Esophagus squamous epithelium (tissue), 5 donors: ENCODE measurements at regions of chr20 and their contacts with region 1.

Region 1: DNA sequence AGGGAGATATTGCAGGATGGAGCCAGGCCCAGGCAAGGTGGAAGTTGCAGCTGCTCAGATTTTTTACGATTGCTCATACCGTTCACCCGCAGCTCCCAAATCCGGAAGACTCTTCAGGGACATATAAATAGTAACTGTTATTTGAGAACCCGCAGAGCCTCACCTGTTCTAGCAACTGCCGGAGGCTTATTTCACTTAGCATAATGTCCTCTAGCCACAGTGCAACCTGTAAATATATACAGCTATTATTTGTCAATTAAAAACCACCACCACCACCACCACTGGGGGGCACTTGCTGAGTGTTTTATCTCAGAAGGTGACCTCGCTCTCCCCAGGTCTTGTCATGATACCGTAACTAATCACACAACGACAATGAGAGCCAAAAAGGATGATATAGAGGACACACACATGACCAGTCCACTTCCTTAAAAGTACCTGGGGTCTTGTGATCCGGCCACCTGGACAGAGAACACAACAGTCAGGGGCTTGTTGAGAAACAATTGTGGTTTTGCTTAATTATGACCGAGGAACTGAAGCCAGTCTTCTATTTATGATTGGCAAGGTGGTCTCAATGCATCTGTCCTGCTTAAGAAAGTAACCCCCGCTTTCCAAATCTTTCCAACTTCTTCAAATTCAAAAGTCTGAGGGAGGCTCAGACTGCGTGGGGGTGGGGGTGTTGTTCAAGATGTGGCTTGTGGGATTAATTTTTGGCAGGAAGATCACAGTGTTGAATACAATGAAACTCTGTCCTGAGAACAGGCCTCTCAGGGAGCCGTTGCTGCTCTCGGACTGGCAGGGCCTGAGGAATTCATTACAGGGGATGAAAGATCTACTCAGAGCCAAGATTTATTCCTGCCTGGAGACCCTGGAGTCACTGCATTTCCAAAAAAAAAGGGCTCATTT is 107.7 kb upstream of the PRND start:
- DNase-seq: peak; percentile 11
- H3K4me3 ChIP-seq: no peak overlapping the region
- H3K27ac ChIP-seq: peak overlapping the region in 1 of 4 donors; percentile 25
- H3K4me1 ChIP-seq: peaks cover 0 to 10% (median 8%) of the 10 kb centered on the region in 3 donors
- H3K27me3 ChIP-seq: peaks cover 0 to 7% (median 0%) of the 10 kb centered on the region in 4 donors
- CTCF ChIP-seq: peak; percentile 38 to 73 (median 52)
- POLR2A ChIP-seq: no peak

Region 2: GRCh38 chr20:4720041-4720976 is 106.3 kb after region 1 on chr20:
- intact Hi-C with region 1: loop called (anchors 2 kb)
- DNase-seq: peak; percentile 20
- H3K4me3 ChIP-seq: peak overlapping the region in 1 of 4 donors; percentile 22
- H3K27ac ChIP-seq: peak overlapping the region; percentile 33 to 77 (median 59)
- H3K4me1 ChIP-seq: peaks cover 0 to 31% (median 4%) of the 10 kb centered on the region in 3 donors
- H3K27me3 ChIP-seq: peaks cover 0 to 34% (median 0%) of the 10 kb centered on the region in 4 donors
- CTCF ChIP-seq: peak; percentile 60 to 81 (median 74)
- POLR2A ChIP-seq: no peak